ENCODE measurements at regions of chr20 and their contacts with region 1.

Region 1: GRCh38 chr20:2172305-2173175 is 70.9 kb downstream of the STK35 start:
- DNase-seq: peak; percentile 20
- H3K4me3 ChIP-seq: no peak overlapping the region
- H3K27ac ChIP-seq: no peak overlapping the region
- H3K27me3 ChIP-seq: peaks cover 3% of the 10 kb centered on the region
- CTCF ChIP-seq: peak; percentile 97

Region 2: GRCh38 chr20:1764136-1765033 is 408.2 kb before region 1 on chr20:
- CTCF ChIA-PET with region 1: interaction called, 23 read pairs
- POLR2A ChIA-PET with region 1: no interaction called
- DNase-seq: peak; percentile 62
- H3K4me3 ChIP-seq: no peak overlapping the region
- H3K27ac ChIP-seq: no peak overlapping the region
- H3K27me3 ChIP-seq: no peaks in the 10 kb centered on the region
- CTCF ChIP-seq: peak; percentile 95

Region 3: DNA sequence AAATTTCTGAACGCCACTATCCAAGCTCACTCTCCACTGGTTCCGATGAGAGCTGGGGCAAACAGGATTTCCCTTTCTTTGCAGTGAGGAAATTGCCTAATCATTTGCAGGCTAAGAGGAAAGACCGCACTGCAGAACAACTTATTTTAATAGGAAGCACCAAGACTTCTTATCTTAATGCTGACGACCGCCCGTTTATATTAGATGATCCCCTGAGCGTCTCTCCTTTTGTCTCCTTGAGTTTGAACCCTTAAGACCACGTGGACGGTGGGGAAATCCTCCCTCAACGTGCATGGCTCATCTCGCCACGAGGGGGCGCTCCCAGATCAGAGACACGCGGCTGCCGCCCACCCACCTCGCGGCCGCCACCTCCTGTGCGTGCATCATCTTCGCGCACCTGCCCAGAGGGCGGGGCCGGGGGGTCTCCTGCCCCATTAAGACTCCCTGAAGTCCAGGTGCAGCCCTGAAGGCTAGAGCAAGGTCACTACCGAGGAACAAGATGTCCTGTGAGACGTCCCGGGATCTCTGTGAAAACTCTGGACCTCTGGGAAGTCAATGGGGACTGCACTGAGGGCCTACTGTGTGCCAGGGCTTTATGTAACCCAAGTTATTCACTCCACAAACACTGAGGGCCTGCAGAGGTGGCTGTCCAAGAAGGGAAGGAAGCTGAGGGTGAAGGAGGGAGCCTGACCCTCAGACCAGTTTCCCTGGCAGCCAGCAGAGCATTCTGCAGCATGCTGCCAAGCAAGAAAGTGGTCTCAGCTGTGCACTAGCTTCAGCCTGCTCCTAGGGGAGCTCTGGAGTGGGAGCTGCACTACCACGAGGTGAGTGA is 206.8 kb before region 1 on chr20:
- CTCF ChIA-PET with region 1: interaction called, 54 read pairs
- POLR2A ChIA-PET with region 1: no interaction called
- DNase-seq: peak; percentile 16
- H3K4me3 ChIP-seq: no peak overlapping the region
- H3K27ac ChIP-seq: no peak overlapping the region
- H3K27me3 ChIP-seq: peaks cover 38% of the 10 kb centered on the region
- CTCF ChIP-seq: peak; percentile 85

Region 4: GRCh38 chr20:2005831-2006426 is 166.6 kb before region 1 on chr20:
- CTCF ChIA-PET with region 1: interaction called, 92 read pairs
- POLR2A ChIA-PET with region 1: no interaction called
- DNase-seq: peak; percentile 29
- H3K4me3 ChIP-seq: no peak overlapping the region
- H3K27ac ChIP-seq: no peak overlapping the region
- H3K27me3 ChIP-seq: no peaks in the 10 kb centered on the region
- CTCF ChIP-seq: no peak

Region 5: DNA sequence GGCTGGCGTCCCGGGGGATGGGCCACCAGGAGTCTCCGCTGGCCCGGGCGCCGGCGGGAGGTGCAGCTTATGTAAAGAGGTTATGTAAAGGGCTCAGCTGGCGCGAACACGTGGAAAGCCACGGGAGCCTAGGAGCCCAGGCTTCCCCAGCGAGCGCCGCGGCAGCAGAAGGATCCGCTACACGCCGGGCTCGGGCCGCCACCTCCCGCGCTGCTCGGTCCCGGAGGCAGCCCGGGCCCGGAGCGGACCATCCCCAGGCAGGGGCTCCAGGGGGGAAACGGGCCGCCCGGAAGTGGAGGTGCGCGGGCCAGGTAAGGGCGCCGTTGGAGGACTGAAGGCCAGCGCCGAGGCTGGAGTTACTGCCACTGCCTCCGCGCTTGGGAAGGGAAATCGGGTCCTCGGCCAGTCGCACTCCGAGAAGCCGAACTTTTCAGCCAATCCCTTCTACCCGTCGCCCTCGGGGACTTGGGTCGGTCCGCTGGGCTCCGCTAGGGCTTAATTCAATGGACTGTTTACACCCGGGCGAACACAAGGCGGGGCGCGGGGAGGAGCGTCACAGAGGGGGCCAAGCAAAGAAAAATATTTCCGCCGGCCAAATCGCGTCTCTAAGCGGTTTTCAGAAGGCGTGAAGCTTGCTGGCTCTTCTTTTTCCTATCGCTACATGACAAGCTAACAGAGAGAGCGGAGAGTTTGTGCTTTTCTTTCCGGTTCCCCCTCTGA is 70.5 kb before region 1 on chr20:
- CTCF ChIA-PET with region 1: interaction called, 10 read pairs
- POLR2A ChIA-PET with region 1: interaction called, 6 read pairs
- DNase-seq: peak; percentile 83
- H3K4me3 ChIP-seq: peak overlapping the region; percentile 98
- H3K27ac ChIP-seq: peak overlapping the region; percentile 100
- H3K27me3 ChIP-seq: no peaks in the 10 kb centered on the region
- CTCF ChIP-seq: no peak